Activated CD4-positive, alpha-beta T cell treated with anti-CD3 and anti-CD28 coated beads, Interleukin-2, amount 10 ng/mL, durations not matched to agents 24 days and 14 days (primary cell): ENCODE measurements at regions of chr15 and their contacts with region 1.

Region 1: DNA sequence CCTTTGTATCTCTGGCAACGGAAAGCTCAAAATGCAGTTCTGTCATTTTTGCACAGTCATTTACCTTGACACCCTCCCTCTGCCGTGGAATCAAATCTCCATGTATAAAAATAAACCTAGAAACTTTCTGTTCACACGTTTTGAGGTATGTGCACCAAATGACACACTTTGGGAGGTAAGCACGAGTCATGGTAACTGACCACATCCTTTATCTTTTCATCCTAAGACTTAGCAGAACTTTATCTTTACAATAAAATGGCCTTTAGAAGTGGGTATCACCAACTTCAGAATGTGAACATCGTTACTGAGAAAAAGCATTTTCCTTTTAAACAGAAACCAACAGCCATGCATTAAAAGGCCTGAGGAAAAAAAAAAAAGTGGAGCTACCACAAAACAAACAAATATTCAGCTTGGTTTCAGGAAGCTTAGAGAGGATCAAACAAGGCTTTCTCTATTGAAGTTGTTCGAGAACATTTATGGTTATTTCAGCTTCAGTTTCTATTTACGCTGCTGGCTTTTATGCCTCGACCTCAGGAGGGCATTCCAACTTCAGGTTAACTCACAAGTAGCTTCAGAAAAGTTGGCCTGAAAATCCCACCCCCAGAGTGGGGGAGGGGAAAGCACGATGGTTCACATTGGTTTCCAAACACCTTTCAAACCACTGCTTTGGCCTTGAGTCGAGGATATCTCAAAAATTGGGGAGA is 171.1 kb upstream of the ICE2 start:
- DNase-seq: peak; percentile 86
- H3K4me3 Mint-ChIP-seq: peak overlapping the region; percentile 75
- H3K27ac Mint-ChIP-seq: peak overlapping the region; percentile 86
- H3K4me1 Mint-ChIP-seq: peaks cover 44% of the 10 kb centered on the region
- H3K27me3 Mint-ChIP-seq: no peaks in the 10 kb centered on the region

Region 2: DNA sequence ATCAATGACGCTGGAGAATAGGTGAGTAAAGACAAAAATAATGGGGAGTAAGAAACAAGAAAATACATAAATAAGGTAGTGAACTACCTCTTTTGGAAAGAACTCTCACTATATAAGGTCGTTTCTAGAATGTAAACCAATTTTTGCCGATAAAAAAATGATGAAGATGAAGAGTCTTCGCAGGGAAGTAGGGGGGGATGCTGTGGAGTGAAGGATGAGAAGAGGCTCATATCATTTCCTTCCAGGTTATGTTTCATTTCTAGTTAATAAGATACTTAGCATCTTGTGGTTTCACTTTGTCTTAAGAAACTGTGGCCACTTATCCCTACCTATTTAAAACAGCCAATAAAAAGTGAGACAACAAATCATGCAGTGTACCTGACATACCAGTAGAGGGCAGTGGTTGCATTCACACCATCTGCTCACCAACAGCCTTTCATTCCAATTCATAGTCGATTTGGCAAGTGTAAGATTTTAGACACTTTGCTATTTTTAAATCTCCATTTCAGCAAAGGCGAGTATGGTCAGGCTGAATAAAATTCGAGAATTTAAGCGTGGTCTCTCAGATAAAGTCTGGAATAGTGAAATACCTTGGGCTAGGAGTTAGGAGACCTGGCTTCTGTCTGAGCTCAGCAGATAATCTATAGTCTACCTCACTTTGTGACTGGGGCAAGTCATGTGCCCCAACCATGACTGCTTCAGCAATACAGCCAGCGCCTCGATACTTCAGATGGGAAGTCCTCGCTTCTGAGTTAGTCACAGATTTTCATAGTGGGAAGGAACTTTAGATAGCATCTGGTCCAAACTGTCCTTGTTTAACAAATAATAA is 142.2 kb before region 1 on chr15:
- intact Hi-C with region 1: loop called (anchors 2 kb)
- DNase-seq: peak; percentile 88
- H3K4me3 Mint-ChIP-seq: peak overlapping the region; percentile 15
- H3K27ac Mint-ChIP-seq: peak overlapping the region; percentile 62
- H3K4me1 Mint-ChIP-seq: peaks cover 29% of the 10 kb centered on the region
- H3K27me3 Mint-ChIP-seq: no peaks in the 10 kb centered on the region

Region 3: DNA sequence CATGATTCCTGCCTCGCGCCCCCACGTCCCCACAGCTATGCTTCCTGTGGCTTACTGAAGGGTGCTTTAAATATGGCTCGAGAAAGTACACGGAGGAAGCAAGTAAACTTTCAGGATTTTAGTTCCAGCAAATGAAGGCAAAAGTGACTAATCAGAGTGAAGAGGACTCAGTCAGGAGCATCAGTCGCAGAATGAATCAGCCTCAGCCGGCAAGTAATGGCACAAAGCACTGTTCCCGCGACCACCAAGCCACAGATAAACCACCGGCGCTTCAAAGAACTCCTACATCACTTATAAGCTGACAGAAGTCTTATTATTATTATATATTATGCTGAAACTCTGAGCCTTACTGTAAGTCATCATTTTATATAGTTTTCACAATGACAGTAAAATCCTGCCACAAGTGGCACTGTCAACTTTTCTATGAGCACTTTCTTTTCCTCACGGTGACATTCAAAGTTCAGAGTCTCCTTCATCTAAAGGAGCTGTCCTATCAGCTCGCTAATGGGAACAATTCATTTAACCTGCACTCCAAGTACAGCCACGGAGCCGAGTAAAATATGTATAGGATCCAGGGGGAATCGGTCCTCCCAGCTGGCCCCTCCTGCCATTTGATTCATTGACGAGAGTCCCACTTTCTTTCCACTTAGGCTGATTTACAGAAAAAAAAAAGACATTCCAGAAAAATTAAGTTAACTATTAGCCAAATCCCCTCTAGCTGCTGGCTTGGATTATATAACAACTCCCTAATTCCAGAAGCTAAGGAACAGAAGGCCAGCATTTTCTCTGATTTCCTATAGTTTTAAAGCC is 45.9 kb after region 1 on chr15:
- intact Hi-C with region 1: loop called (anchors 1 kb)
- DNase-seq: peak; percentile 81
- H3K4me3 Mint-ChIP-seq: peak overlapping the region; percentile 66
- H3K27ac Mint-ChIP-seq: peak overlapping the region; percentile 79
- H3K4me1 Mint-ChIP-seq: peaks cover 42% of the 10 kb centered on the region
- H3K27me3 Mint-ChIP-seq: no peaks in the 10 kb centered on the region

Region 4: GRCh38 chr15:60798821-60799220 is 148.8 kb after region 1 on chr15:
- intact Hi-C with region 1: loop called (anchors 1 kb)
- DNase-seq: no peak
- H3K4me3 Mint-ChIP-seq: peak overlapping the region; percentile 36
- H3K27ac Mint-ChIP-seq: peak overlapping the region; percentile 83
- H3K4me1 Mint-ChIP-seq: peaks cover 49% of the 10 kb centered on the region
- H3K27me3 Mint-ChIP-seq: no peaks in the 10 kb centered on the region

Region 5: DNA sequence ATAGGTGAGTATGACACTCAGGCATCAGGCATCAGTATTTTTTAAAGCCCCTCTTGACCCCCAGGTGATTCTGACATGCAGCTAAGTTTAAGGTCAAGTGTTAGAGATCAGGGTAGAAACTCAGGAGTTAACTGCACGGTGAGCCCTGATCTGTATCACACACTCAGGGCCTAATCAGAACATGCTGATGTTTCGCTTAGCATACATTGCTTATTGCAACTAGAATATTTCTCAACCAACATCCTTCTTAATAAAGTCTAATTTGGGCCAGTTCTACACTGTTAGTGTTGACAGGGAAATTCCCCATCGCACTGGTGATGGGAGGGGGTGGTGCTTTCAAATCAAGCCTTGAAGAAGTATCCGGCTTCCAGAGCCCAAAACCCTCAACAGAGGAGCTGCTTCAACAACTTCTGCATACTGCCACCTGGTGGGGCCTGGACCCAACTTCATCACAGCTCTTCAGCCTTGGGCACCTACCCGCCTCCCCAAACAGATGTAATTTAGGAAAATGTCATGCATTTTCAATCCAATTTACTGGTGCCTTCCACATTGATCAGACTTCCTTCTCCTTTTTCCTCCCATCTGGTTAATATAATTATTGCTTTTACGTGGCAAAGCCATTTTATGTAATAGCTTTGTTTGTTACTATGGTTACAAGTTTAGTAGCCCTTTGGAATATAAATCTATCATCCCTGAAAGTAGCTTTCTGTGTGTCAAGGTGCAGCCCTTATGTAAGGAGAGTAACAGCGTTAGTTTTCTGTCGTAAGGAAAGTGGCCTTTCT is 266.9 kb after region 1 on chr15:
- intact Hi-C with region 1: loop called (anchors 2 kb)
- DNase-seq: peak; percentile 95
- H3K4me3 Mint-ChIP-seq: no peak overlapping the region
- H3K27ac Mint-ChIP-seq: peak overlapping the region; percentile 75
- H3K4me1 Mint-ChIP-seq: peaks cover 27% of the 10 kb centered on the region
- H3K27me3 Mint-ChIP-seq: no peaks in the 10 kb centered on the region